ENCODE measurements at regions of chr19 and their contacts with region 1.

Region 1: GRCh38 chr19:47713046-47714021 is at the start of gene EHD2:
- DNase-seq: peak; percentile 60
- CTCF ChIP-seq: peak; percentile 59

Region 2: DNA sequence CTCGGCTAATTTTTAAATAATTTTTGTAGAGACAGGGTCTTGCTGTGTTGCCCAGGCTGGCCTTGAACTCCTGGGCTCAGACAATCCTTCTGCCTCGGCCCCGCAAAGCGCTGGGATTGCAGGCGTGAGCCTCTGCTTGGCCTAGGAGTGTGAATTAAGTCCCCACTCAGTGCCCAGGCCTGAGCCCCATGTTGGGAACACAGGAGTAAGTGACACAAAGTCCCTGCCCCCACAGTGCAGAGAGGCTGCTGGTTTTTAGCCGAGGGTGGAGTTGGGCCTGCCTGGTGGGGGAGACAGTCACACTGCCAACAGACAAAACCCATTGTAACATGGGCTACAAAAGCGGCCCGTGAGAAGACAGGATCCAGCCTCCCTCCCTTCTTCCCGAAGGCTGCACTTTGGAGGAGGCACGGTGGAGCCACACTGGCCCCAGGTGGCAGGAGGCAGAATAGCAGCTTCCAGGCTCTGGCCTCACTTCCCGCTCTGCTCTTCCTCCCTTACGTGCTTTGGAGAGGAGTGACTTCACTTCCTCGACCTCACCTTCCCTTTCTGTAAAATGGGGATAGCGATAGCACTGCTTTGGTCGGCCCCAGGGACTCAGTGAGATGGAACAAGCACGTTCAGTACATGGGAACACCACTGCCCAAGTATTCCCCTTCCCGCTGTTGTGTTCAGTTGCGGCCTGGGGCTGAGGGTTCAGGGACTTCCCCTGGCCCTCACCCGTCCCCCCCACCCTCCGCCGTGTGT is 15.3 kb before region 1 on chr19:
- CTCF ChIA-PET with region 1: interaction called, 38 read pairs
- POLR2A ChIA-PET with region 1: no interaction called
- DNase-seq: peak; percentile 85
- CTCF ChIP-seq: peak; percentile 95

Region 3: GRCh38 chr19:47725759-47726401 is 12.5 kb after region 1 on chr19:
- CTCF ChIA-PET with region 1: interaction called, 36 read pairs
- POLR2A ChIA-PET with region 1: interaction called, 3 read pairs
- DNase-seq: no peak
- CTCF ChIP-seq: no peak

Region 4: GRCh38 chr19:47745010-47745901 is 31.9 kb after region 1 on chr19 and contains the start of gene NOP53:
- CTCF ChIA-PET with region 1: interaction called, 32 read pairs
- POLR2A ChIA-PET with region 1: no interaction called
- DNase-seq: peak; percentile 96
- CTCF ChIP-seq: no peak